Colonic mucosa (tissue), 4 donors: ENCODE measurements at regions of chr4 and their contacts with region 1.

Region 1: DNA sequence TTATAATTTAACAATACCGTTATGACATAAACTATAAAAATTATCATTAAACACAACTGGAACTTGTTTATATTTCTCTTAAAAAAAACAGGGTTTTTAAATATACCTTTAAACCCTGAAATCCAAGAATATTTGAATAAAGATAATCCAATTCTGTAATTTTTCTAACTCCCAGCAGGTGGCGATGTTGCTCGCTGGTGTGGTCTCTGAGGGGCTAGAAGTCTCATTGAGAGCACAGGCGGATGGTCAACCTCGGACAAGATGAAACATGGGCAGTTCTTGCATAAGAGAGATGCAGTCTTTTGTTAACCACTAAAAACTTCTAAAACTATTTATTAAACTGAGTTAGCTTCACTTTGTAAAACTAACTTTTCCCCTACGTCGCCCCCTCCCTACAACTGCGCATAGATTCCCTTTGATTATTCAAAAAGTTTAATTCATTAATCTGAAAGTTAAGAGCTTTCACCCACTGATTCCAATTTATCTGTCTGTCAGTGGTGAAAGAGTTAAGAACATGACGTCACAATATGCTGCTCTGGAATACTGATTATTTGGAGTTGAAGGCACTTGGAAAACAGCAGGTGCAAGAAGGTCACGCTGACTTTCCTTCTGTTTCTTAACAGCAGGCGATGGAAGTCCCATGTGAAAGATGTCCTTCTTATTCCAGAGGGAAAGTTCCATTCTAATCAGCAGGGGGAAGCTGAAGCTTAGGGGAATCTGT is 29.5 kb downstream of the DMP1 start:
- DNase-seq: no peak
- H3K4me3 ChIP-seq: no peak overlapping the region
- H3K27ac ChIP-seq: no peak overlapping the region
- H3K4me1 ChIP-seq: no peaks in the 10 kb centered on the region
- H3K27me3 ChIP-seq: no peaks in the 10 kb centered on the region
- CTCF ChIP-seq: peak; percentile 75

Region 2: GRCh38 chr4:87848622-87849351 is 169.2 kb after region 1 on chr4:
- intact Hi-C with region 1: loop called (anchors 5 kb)
- DNase-seq: peak; percentile 43
- H3K4me3 ChIP-seq: no peak overlapping the region
- H3K27ac ChIP-seq: no peak overlapping the region
- H3K4me1 ChIP-seq: no peaks in the 10 kb centered on the region
- H3K27me3 ChIP-seq: no peaks in the 10 kb centered on the region
- CTCF ChIP-seq: peak; percentile 49

Region 3: DNA sequence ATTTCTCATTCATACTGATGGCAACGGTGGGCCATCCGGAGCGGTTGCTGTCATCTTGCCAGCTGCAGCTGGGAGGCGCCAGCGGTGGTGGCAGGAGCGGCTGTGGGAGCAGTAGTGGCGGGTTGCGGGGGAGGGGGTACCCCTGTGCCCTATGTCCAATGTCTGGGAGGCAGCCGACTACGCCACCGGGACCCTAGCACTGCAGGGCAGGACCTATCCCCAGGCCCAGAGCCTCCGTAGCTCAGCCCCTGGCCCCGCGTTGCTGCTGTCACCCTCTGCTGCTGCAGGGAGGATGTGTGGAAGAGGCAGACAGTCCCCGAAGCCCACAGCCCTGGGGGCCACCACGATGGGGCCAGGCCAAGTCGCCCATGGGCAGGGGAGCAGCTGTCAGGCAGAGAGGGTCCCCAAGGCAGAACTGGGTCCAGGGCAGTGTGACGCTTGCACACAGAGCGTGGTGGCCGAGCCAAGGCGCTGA is 285.9 kb after region 1 on chr4:
- intact Hi-C with region 1: loop called (anchors 5 kb)
- DNase-seq: no peak
- H3K4me3 ChIP-seq: no peak overlapping the region
- H3K27ac ChIP-seq: no peak overlapping the region
- H3K4me1 ChIP-seq: no peaks in the 10 kb centered on the region
- H3K27me3 ChIP-seq: no peaks in the 10 kb centered on the region
- CTCF ChIP-seq: no peak